Activated CD4-positive, alpha-beta T cell treated with anti-CD3 and anti-CD28 coated beads, Interleukin-2, amount 10 ng/mL, durations not matched to agents 7 days and 5 days (primary cell): ENCODE measurements at regions of chr1 and their contacts with region 1.

Region 1: GRCh38 chr1:110816930-110817329 is 56.0 kb upstream of the CD53 start:
- DNase-seq: no peak
- H3K4me3 Mint-ChIP-seq: no peak overlapping the region
- H3K27ac Mint-ChIP-seq: no peak overlapping the region
- H3K4me1 Mint-ChIP-seq: no peaks in the 10 kb centered on the region
- H3K27me3 Mint-ChIP-seq: peaks cover 32% of the 10 kb centered on the region

Region 2: GRCh38 chr1:110829955-110830553 is 13.1 kb after region 1 on chr1:
- CTCF ChIA-PET with region 1: interaction called, 10 read pairs
- POLR2A ChIA-PET with region 1: no interaction called
- DNase-seq: peak; percentile 56
- H3K4me3 Mint-ChIP-seq: no peak overlapping the region
- H3K27ac Mint-ChIP-seq: no peak overlapping the region
- H3K4me1 Mint-ChIP-seq: peaks cover 8% of the 10 kb centered on the region
- H3K27me3 Mint-ChIP-seq: peaks cover 8% of the 10 kb centered on the region